ENCODE measurements at regions of chr2 and their contacts with region 1.

Region 1: DNA sequence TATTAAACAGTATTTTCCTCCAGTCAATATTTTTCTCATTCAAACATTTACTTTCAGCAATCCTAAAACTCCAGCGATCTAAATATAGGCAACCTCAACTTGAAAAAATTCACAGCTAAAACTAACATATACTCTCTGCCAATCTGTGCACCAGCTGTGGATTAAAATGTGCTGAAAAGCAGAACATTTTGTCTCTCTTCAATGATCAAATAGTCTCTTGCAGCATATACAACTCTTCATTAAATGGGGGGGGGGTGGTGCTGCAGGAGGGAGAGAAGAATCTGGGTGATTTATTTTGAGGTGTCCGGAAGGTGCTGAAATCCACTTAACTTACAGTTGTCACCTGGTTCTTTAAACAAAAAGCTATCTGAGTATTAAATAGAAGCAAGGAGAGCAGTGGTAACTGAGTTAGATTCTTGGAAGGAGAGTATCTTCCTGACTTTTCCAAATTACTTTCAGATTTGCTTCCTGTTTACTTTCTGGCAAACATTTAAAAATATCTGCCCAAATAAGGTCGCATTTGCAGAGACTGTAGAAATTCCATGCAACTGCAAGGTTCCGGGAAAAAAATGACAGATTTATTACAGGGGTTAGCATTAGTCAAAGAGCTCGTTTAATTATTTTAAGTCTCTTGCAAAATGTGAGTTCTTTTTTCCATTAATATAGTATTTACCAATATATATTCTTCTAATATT is 904.7 kb upstream of the ACVR2A start:
- DNase-seq: no peak
- H3K4me3 ChIP-seq: peak overlapping the region in 1 of 4 donors; percentile 34
- H3K27ac ChIP-seq: peak overlapping the region; percentile 70 to 80 (median 72)
- H3K4me1 ChIP-seq: peaks cover 7 to 34% (median 31%) of the 10 kb centered on the region in 4 donors
- H3K27me3 ChIP-seq: no peaks in the 10 kb centered on the region
- CTCF ChIP-seq: no peak
- EP300 ChIP-seq: peak; percentile 11
- POLR2A ChIP-seq: no peak

Region 2: GRCh38 chr2:147025646-147026585 is 85.8 kb after region 1 on chr2:
- intact Hi-C with region 1: loop called (anchors 10 kb)
- DNase-seq: no peak
- H3K4me3 ChIP-seq: no peak overlapping the region
- H3K27ac ChIP-seq: peak overlapping the region in 3 of 4 donors; percentile 0 to 44 (median 34)
- H3K4me1 ChIP-seq: peaks cover 0 to 44% (median 41%) of the 10 kb centered on the region in 4 donors
- H3K27me3 ChIP-seq: no peaks in the 10 kb centered on the region
- CTCF ChIP-seq: no peak
- EP300 ChIP-seq: no peak
- POLR2A ChIP-seq: no peak

Measured in esophagus muscularis mucosa (tissue), 4 donors.